Body of pancreas (tissue), 4 donors: ENCODE measurements at regions of chr2 and their contacts with region 1.

Region 1: GRCh38 chr2:169131587-169132512 is 62.5 kb downstream of the DHRS9 start:
- DNase-seq: no peak
- ATAC-seq: peak; percentile 65
- H3K4me3 ChIP-seq: no peak overlapping the region
- H3K27ac ChIP-seq: no peak overlapping the region
- H3K4me1 ChIP-seq: no peaks in the 10 kb centered on the region
- H3K27me3 ChIP-seq: no peaks in the 10 kb centered on the region
- CTCF ChIP-seq: peak; percentile 61 to 90 (median 77)
- POLR2A ChIP-seq: no peak

Region 2: DNA sequence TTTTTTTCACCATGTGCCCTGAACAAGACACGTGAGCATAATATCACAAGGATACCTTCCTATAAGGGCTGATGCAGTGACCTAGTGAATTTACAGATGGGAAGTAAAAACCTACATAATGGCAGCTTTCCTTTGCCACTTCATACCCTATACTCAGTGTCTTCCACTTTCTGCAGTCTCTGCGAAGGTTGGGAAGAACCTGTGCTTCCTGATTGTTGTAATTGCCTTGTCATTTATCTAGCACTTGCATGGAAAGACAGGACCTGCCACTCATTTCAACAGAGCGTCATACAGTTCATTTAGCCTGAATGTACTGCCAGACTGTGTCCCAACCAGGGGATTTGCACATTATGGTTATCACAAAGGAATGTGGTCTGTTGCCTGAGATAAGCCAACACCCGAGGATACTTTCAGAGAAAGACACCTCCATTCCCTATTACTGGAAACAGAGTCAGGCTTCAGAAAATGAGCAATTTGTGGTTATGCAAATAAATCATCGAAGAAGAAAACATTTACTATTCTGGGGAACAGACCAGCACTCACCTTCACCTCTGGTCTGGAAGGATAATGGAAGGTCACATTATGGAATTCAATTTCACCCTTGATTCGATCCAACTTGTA is 155.7 kb before region 1 on chr2:
- intact Hi-C with region 1: loop called (anchors 10 kb)
- DNase-seq: no peak
- ATAC-seq: no peak
- H3K4me3 ChIP-seq: no peak overlapping the region
- H3K27ac ChIP-seq: no peak overlapping the region
- H3K4me1 ChIP-seq: no peaks in the 10 kb centered on the region
- H3K27me3 ChIP-seq: no peaks in the 10 kb centered on the region
- CTCF ChIP-seq: no peak
- POLR2A ChIP-seq: no peak